ENCODE measurements at regions of chr4 and their contacts with region 1.

Region 1: DNA sequence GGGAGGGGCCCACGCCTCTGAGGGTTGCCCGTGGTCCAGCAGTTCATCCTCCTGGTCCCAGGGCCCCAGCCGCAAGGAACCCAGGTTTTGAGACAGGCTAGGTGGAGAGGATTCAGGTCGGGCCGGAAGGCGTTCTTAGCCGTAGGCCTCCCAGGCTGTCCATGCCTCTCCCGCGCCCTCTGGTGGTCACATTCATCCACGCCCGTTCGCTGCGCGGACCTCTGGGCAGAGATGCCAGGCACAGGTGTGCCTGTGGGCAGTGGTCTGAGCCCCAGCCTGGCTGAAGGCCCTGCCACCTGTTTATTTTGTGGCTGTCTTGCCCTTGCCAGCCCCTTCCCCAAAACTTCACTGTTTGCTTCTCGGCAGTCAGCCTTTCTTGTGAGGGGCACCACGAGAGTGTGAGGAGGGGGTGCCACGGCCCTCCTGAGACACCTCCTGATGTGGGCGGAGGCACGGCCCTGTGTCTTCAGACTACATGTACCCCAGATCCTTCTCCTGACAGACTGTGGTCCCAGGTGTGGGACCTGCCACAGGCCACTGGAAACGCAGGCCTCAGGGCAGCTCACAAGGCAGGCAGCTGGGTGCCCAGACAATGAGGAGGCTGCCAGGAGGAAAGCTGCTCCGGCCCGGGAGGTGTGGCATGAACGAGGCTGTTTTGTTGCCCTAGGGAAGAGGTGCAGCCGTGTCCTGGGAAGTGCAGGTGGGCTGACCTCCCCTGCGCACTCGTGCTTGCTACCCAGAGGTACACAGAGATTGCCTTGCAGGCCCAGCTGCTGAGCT is 5.0 kb downstream of the UVSSA start:
- DNase-seq: peak; percentile 80 to 94 (median 89)
- ATAC-seq: peak; percentile 39
- H3K4me3 ChIP-seq: no peak overlapping the region
- H3K4me3 Mint-ChIP-seq: peak overlapping the region; percentile 66
- H3K27ac ChIP-seq: no peak overlapping the region
- H3K27ac Mint-ChIP-seq: peak overlapping the region; percentile 77
- H3K4me1 ChIP-seq: peaks cover 36% of the 10 kb centered on the region
- H3K4me1 Mint-ChIP-seq: peaks cover 38% of the 10 kb centered on the region
- H3K27me3 ChIP-seq: no peaks in the 10 kb centered on the region
- H3K27me3 Mint-ChIP-seq: no peaks in the 10 kb centered on the region
- CTCF ChIP-seq: peak; percentile 92

Region 2: GRCh38 chr4:1130316-1131186 is 221.5 kb before region 1 on chr4:
- CTCF ChIA-PET with region 1: interaction called, 4 read pairs
- POLR2A ChIA-PET with region 1: interaction called, 4 read pairs
- intact Hi-C with region 1: loop called (anchors 1 kb)
- DNase-seq: peak; percentile 64 to 89 (median 72)
- ATAC-seq: peak; percentile 100
- H3K4me3 ChIP-seq: no peak overlapping the region
- H3K4me3 Mint-ChIP-seq: no peak overlapping the region
- H3K27ac ChIP-seq: no peak overlapping the region
- H3K27ac Mint-ChIP-seq: no peak overlapping the region
- H3K4me1 ChIP-seq: peaks cover 3% of the 10 kb centered on the region
- H3K4me1 Mint-ChIP-seq: peaks cover 5% of the 10 kb centered on the region
- H3K27me3 ChIP-seq: peaks cover 0 to 5% of the 10 kb centered on the region in 2 experiments
- H3K27me3 Mint-ChIP-seq: peaks cover 8% of the 10 kb centered on the region
- CTCF ChIP-seq: peak; percentile 99

Region 3: DNA sequence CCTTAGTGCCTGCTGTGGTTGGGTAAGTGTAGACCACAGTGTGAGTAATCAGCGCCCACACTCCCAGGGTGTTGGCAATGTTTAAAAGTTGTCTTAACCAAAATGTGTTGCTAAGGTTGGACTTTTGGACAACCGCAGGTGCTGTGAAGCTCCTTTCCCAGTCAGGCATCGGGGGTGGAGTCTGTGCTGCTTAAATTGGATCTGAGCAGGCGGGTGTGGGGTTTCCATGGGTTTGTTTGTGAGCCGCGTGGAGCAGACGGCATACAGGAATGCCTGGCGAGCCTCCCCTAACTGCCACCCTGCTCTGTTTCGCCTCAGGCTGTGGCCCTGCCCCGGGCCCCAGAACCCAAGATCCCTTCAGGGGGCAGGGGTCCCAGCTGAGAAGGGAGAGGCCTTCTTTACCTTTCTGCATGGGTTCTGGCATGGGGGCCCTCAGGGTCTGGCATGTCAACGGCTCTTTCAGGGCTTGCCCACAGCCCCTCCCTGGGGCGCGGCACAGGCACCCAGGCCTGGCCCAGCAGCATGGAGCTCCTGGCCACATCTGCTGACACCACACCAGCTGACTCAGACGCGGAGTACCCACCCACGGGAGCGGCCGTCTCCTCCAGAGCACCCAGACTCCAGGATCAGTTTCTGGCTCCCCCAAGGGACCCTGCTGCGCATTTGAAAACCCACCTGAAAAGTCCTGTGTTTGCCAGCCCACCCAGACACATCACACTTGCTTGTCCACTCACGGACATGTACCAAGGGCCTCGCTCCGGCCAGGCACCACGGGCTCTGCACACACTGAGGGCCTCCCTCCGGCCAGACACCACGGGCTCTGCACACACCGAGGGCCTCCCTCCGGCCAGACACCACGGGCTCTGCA is 174.5 kb before region 1 on chr4:
- CTCF ChIA-PET with region 1: no interaction called
- POLR2A ChIA-PET with region 1: no interaction called
- intact Hi-C with region 1: no loop called
- DNase-seq: peak in 3 of 14 experiments; percentile 39 to 73 (median 56)
- ATAC-seq: no peak
- H3K4me3 ChIP-seq: no peak overlapping the region
- H3K4me3 Mint-ChIP-seq: no peak overlapping the region
- H3K27ac ChIP-seq: no peak overlapping the region
- H3K27ac Mint-ChIP-seq: no peak overlapping the region
- H3K4me1 ChIP-seq: peaks cover 22% of the 10 kb centered on the region
- H3K4me1 Mint-ChIP-seq: peaks cover 11% of the 10 kb centered on the region
- H3K27me3 ChIP-seq: peaks cover 9 to 11% of the 10 kb centered on the region in 2 experiments
- H3K27me3 Mint-ChIP-seq: peaks cover 13% of the 10 kb centered on the region
- CTCF ChIP-seq: no peak

Region 4: DNA sequence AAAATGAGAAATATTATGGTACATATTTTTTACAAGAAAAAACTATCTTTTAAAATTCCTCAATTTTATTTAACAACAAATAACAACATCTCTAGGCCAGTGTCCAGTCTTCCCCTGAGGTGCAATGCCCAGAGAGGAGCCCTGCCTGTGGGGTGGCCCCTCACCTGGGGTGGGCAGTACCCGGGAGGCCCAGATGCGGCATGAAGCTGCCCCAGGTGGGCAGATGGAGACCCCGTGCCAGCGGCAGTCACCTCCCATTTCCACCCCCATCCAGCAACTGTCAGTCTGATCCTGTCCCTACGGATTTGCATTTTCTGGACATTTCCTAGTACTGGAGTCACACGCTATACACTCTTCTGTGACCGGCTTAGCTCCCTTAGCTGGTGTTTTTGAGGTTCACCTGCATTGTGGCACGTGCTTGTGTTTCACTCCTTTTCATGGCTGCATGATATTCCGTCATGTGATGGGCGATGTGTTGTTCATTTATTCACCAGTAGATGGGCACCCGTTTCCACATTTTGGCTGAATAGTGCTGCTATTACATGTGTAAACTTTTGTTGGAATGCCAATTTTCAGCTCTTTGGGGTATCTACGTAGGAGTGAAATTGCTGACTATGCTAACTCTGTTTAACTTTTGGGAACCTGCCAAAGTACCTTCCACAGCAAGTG is 74.2 kb before region 1 on chr4:
- CTCF ChIA-PET with region 1: no interaction called
- POLR2A ChIA-PET with region 1: no interaction called
- intact Hi-C with region 1: loop called in 1 of 2 experiments (anchors 1 kb)
- DNase-seq: peak in 3 of 14 experiments; percentile 21 to 48 (median 41)
- ATAC-seq: peak; percentile 41
- H3K4me3 ChIP-seq: no peak overlapping the region
- H3K4me3 Mint-ChIP-seq: no peak overlapping the region
- H3K27ac ChIP-seq: no peak overlapping the region
- H3K27ac Mint-ChIP-seq: no peak overlapping the region
- H3K4me1 ChIP-seq: no peaks in the 10 kb centered on the region
- H3K4me1 Mint-ChIP-seq: no peaks in the 10 kb centered on the region
- H3K27me3 ChIP-seq: no peaks in the 10 kb centered on the region
- H3K27me3 Mint-ChIP-seq: no peaks in the 10 kb centered on the region
- CTCF ChIP-seq: no peak

Region 5: DNA sequence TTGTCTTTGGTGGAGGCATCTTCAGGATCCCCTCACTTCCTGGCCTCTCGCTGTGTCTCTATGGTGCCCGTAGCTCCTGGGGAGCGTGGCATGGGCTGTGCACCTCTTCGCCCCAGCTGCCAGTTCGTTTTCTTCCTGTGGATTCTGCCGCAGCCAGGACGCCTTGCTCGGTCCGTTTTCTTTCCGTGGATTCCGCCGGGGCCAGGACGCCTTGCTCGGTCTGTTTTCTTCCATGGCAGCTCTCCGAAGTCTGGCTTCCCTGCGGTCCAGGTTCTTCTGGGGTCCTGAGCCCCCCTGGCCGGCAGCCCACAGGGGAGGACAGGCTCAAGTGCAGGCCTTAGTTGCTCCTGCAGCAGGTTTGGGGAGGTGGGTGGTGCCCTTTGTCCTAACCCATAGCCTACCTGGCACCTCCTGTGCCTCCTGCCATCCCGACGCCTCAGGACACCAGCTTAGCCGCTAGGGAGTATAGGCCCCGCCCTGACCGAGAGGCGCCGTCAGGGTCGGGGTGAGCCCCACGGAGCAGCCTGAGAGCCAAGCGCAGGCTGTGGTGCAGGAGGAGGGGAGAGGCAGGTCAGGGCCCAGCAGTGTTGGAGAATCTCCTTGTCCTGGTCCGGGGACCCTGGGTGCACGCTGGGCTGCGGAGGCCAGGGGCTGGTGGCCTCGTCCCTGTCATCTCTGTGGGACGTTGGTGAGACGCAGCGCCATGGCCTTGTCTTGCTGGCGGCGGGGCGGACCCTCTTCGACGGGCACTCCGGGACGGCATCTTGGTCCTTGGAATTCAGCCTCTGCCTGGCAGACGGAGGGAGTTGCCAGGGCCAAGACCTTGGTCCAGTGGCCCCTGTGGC is 22.1 kb after region 1 on chr4:
- CTCF ChIA-PET with region 1: no interaction called
- POLR2A ChIA-PET with region 1: no interaction called
- intact Hi-C with region 1: no loop called
- DNase-seq: no peak
- ATAC-seq: no peak
- H3K4me3 ChIP-seq: no peak overlapping the region
- H3K4me3 Mint-ChIP-seq: no peak overlapping the region
- H3K27ac ChIP-seq: no peak overlapping the region
- H3K27ac Mint-ChIP-seq: no peak overlapping the region
- H3K4me1 ChIP-seq: no peaks in the 10 kb centered on the region
- H3K4me1 Mint-ChIP-seq: no peaks in the 10 kb centered on the region
- H3K27me3 ChIP-seq: no peaks in the 10 kb centered on the region
- H3K27me3 Mint-ChIP-seq: no peaks in the 10 kb centered on the region
- CTCF ChIP-seq: no peak

Region 6: GRCh38 chr4:1384675-1385372 is 32.8 kb after region 1 on chr4:
- CTCF ChIA-PET with region 1: no interaction called
- POLR2A ChIA-PET with region 1: no interaction called
- intact Hi-C with region 1: no loop called
- DNase-seq: no peak
- ATAC-seq: no peak
- H3K4me3 ChIP-seq: no peak overlapping the region
- H3K4me3 Mint-ChIP-seq: no peak overlapping the region
- H3K27ac ChIP-seq: no peak overlapping the region
- H3K27ac Mint-ChIP-seq: no peak overlapping the region
- H3K4me1 ChIP-seq: no peaks in the 10 kb centered on the region
- H3K4me1 Mint-ChIP-seq: no peaks in the 10 kb centered on the region
- H3K27me3 ChIP-seq: no peaks in the 10 kb centered on the region
- H3K27me3 Mint-ChIP-seq: no peaks in the 10 kb centered on the region
- CTCF ChIP-seq: no peak

Region 7: GRCh38 chr4:1628892-1629698 is 277.1 kb after region 1 on chr4:
- CTCF ChIA-PET with region 1: interaction called, 6 read pairs
- POLR2A ChIA-PET with region 1: interaction called, 3 read pairs
- intact Hi-C with region 1: loop called in 1 of 2 experiments (anchors 1 kb)
- DNase-seq: peak; percentile 43 to 84 (median 64)
- ATAC-seq: peak; percentile 76
- H3K4me3 ChIP-seq: no peak overlapping the region
- H3K4me3 Mint-ChIP-seq: no peak overlapping the region
- H3K27ac ChIP-seq: no peak overlapping the region
- H3K27ac Mint-ChIP-seq: no peak overlapping the region
- H3K4me1 ChIP-seq: peaks cover 23% of the 10 kb centered on the region
- H3K4me1 Mint-ChIP-seq: no peaks in the 10 kb centered on the region
- H3K27me3 ChIP-seq: no peaks in the 10 kb centered on the region
- H3K27me3 Mint-ChIP-seq: no peaks in the 10 kb centered on the region
- CTCF ChIP-seq: peak; percentile 98